H1 (cell line): ENCODE measurements at regions of chr18 and their contacts with region 1.

Region 1: GRCh38 chr18:61635901-61636528 is 256.8 kb downstream of the RNF152 start:
- DNase-seq: peak in 1 of 2 experiments; percentile 76
- H3K4me3 ChIP-seq: no peak overlapping the region
- H3K27ac ChIP-seq: no peak overlapping the region
- H3K4me1 ChIP-seq: peaks cover 14 to 22% (median 19%) of the 10 kb centered on the region in 4 experiments
- H3K27me3 ChIP-seq: peaks cover 18 to 36% (median 34%) of the 10 kb centered on the region in 4 experiments
- CTCF ChIP-seq: peak; percentile 71 to 83 (median 72)
- EP300 ChIP-seq: no peak
- POLR2A ChIP-seq: no peak
- RAD21 ChIP-seq: peak; percentile 87 to 88

Region 2: GRCh38 chr18:61551586-61551985 is 84.4 kb before region 1 on chr18:
- CTCF ChIA-PET with region 1: interaction called, 12 read pairs
- POLR2A ChIA-PET with region 1: no interaction called
- DNase-seq: peak in 1 of 2 experiments; percentile 47
- H3K4me3 ChIP-seq: no peak overlapping the region
- H3K27ac ChIP-seq: no peak overlapping the region
- H3K4me1 ChIP-seq: no peaks in the 10 kb centered on the region
- H3K27me3 ChIP-seq: no peaks in the 10 kb centered on the region
- CTCF ChIP-seq: peak in 2 of 3 experiments; percentile 77 to 79; a peak in 3 of 4 replicates
- EP300 ChIP-seq: no peak
- POLR2A ChIP-seq: no peak
- RAD21 ChIP-seq: peak; percentile 81 to 85

Region 3: GRCh38 chr18:61581578-61582201 is 54.3 kb before region 1 on chr18:
- CTCF ChIA-PET with region 1: interaction called, 15 read pairs
- POLR2A ChIA-PET with region 1: no interaction called
- DNase-seq: peak; percentile 71 to 99
- H3K4me3 ChIP-seq: peak overlapping the region; percentile 37 to 60 (median 48); a peak in 7 of 8 replicates
- H3K27ac ChIP-seq: no peak overlapping the region
- H3K4me1 ChIP-seq: no peaks in the 10 kb centered on the region; a peak in 1 of 7 replicates
- H3K27me3 ChIP-seq: peaks cover 1 to 10% (median 8%) of the 10 kb centered on the region in 4 experiments; a peak in 6 of 7 replicates
- CTCF ChIP-seq: peak; percentile 88 to 94 (median 89)
- EP300 ChIP-seq: no peak
- POLR2A ChIP-seq: no peak
- RAD21 ChIP-seq: peak; percentile 88 to 91

Region 4: GRCh38 chr18:61606759-61607158 is 29.3 kb before region 1 on chr18:
- CTCF ChIA-PET with region 1: interaction called, 17 read pairs
- POLR2A ChIA-PET with region 1: interaction called, 6 read pairs
- DNase-seq: peak; percentile 54 to 72
- H3K4me3 ChIP-seq: peak overlapping the region in 3 of 4 experiments; percentile 15 to 47 (median 26); a peak in 5 of 8 replicates
- H3K27ac ChIP-seq: no peak overlapping the region
- H3K4me1 ChIP-seq: peaks cover 2 to 9% (median 3%) of the 10 kb centered on the region in 4 experiments; a peak in 3 of 7 replicates
- H3K27me3 ChIP-seq: no peaks in the 10 kb centered on the region
- CTCF ChIP-seq: no peak
- EP300 ChIP-seq: no peak
- POLR2A ChIP-seq: peak in 1 of 2 experiments; percentile 36; a peak in 1 of 3 replicates
- RAD21 ChIP-seq: no peak

Region 5: DNA sequence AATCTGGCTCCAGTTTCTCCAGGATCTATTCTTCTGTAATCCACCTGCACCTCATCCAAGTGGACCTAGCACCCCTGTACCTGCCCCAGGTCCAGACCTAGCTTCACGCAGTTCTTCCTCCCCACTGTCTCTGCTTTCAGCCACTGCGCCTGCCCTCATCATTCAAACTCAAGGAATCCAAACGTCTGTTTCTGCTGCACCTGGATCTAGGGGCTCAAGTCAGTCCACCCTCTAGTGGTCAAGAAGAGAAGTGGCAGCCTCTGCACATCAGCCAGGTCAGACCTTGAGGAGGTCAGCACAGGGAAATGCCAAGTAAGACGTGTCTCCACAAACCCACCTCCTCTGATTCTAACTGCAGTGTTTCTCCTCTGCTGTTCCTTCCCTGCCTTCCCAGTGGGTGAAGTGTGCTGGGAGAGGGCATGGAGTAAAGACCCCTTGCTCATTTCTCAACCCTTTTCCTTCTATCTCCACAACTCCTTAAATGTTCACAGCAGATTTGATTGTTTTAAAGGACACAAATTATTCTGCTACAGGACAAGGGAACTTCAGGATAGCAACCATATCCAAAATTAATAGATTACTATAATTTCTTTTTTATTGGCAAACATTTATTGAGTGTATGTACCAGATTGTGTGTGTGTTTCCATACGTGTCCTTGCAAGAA is 265.4 kb after region 1 on chr18:
- CTCF ChIA-PET with region 1: interaction called, 22 read pairs
- POLR2A ChIA-PET with region 1: no interaction called
- DNase-seq: peak in 1 of 2 experiments; percentile 61
- H3K4me3 ChIP-seq: no peak overlapping the region
- H3K27ac ChIP-seq: no peak overlapping the region
- H3K4me1 ChIP-seq: peaks cover 0 to 3% (median 1%) of the 10 kb centered on the region in 4 experiments; a peak in 3 of 7 replicates
- H3K27me3 ChIP-seq: no peaks in the 10 kb centered on the region
- CTCF ChIP-seq: peak; percentile 88 to 100 (median 90)
- EP300 ChIP-seq: no peak
- POLR2A ChIP-seq: no peak
- RAD21 ChIP-seq: peak; percentile 86 to 92

Region 6: GRCh38 chr18:61908661-61909060 is 272.6 kb after region 1 on chr18:
- CTCF ChIA-PET with region 1: interaction called, 10 read pairs
- POLR2A ChIA-PET with region 1: no interaction called
- DNase-seq: no peak
- H3K4me3 ChIP-seq: no peak overlapping the region
- H3K27ac ChIP-seq: no peak overlapping the region
- H3K4me1 ChIP-seq: 0 out of 7 replicates have a peak, but pooled peaks cover 0 to 1% (median 0%) of the 10 kb centered on the region in 4 experiments
- H3K27me3 ChIP-seq: no peaks in the 10 kb centered on the region
- CTCF ChIP-seq: no peak
- EP300 ChIP-seq: no peak
- POLR2A ChIP-seq: no peak
- RAD21 ChIP-seq: no peak

Region 7: GRCh38 chr18:62131301-62131909 is 495.4 kb after region 1 on chr18:
- CTCF ChIA-PET with region 1: interaction called, 14 read pairs
- POLR2A ChIA-PET with region 1: no interaction called
- DNase-seq: peak in 1 of 2 experiments; percentile 61
- H3K4me3 ChIP-seq: no peak overlapping the region
- H3K27ac ChIP-seq: no peak overlapping the region
- H3K4me1 ChIP-seq: no peaks in the 10 kb centered on the region
- H3K27me3 ChIP-seq: peaks cover 0 to 1% (median 0%) of the 10 kb centered on the region in 4 experiments; a peak in 1 of 7 replicates
- CTCF ChIP-seq: peak; percentile 60 to 86 (median 84)
- EP300 ChIP-seq: no peak
- POLR2A ChIP-seq: no peak
- RAD21 ChIP-seq: peak; percentile 97